Ovary (tissue), 10 donors: ENCODE measurements at regions of chr4 and their contacts with region 1.

Region 1: GRCh38 chr4:39977489-39978377 is at the start of gene PDS5A:
- DNase-seq: peak; percentile 84 to 92 (median 88)
- H3K4me3 ChIP-seq: peak within 1 kb of the TSS; percentile 95
- H3K27ac ChIP-seq: peak within 1 kb of the TSS; percentile 90 to 91
- H3K4me1 ChIP-seq: peaks cover 1% of the 10 kb centered on the region
- H3K27me3 ChIP-seq: no peaks in the 10 kb centered on the region
- CTCF ChIP-seq: peak; percentile 70 to 98 (median 98)
- EP300 ChIP-seq: no peak
- POLR2A ChIP-seq: peak; percentile 38
- total RNA-seq, gene PDS5A: 47.3 to 68.8 (median 64.7) TPM

Region 2: DNA sequence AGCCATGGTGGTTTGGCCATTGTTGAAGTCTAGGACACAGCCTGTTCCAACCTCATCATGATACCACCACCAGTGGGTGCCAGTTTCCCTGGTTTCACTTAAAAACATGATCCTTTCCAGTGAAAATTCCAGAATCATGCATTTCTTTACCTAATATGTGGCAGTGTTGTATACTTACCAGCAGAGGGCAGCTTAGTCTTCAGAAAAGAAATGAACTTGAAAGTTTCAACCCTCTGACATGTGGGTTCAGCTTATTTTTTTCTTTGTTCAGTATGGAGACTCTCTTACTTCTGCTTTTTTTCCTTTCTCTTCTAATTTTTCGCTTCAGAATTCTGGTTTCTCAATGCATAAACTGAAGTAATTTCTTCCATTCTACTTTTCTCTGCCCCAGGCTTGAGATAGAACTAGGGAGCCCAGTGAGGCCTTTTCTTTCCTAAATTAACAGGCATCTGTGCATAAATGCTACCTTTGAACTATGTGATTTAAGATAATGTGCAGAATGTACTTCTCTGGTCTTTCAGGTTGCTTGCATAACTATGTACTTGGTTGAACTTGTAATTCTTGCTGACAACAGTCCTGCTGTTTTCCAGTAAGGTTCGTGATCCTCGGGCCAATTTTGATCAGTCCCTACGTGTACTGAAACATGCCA is 508.2 kb before region 1 on chr4:
- intact Hi-C with region 1: loop called in 3 of 4 experiments (anchors 1 to 5 kb)
- DNase-seq: peak in 4 of 5 donors; percentile 46 to 69 (median 50)
- H3K4me3 ChIP-seq: no peak overlapping the region
- H3K27ac ChIP-seq: peak overlapping the region in 1 of 2 donors; percentile 57
- H3K4me1 ChIP-seq: no peaks in the 10 kb centered on the region
- H3K27me3 ChIP-seq: no peaks in the 10 kb centered on the region
- CTCF ChIP-seq: peak; percentile 76 to 91 (median 87)
- EP300 ChIP-seq: no peak
- POLR2A ChIP-seq: no peak

Region 3: GRCh38 chr4:39697740-39698423 is 279.9 kb before region 1 on chr4 and contains the start of gene UBE2K:
- intact Hi-C with region 1: loop called (anchors 2 to 10 kb)
- DNase-seq: peak; percentile 87 to 94 (median 88)
- H3K4me3 ChIP-seq: peak within 1 kb of the TSS; percentile 90
- H3K27ac ChIP-seq: peak within 1 kb of the TSS; percentile 62 to 87
- H3K4me1 ChIP-seq: no peaks in the 10 kb centered on the region
- H3K27me3 ChIP-seq: no peaks in the 10 kb centered on the region
- CTCF ChIP-seq: no peak
- EP300 ChIP-seq: no peak
- POLR2A ChIP-seq: peak; percentile 86
- total RNA-seq, gene UBE2K: 17.6 to 63.8 (median 52.2) TPM

Region 4: DNA sequence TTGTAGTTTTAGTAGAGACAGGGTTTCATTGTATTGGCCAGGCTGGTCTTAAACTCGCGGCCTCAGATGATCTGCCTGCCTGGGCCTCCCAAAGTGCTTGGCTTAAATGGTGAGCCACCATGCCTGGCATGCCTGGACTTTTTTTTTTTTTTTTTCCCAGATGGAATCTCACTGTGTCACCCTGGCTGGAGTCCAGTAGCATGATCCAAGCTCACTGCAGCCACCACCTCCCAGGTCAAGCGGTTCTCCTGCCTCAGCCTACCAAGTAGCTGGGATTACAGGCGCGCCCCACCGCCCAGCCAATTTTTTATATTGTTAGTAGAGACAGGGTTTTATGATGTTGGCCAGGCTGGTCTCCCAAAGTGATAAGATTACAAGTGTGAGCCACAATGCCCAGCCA is 271.4 kb before region 1 on chr4:
- intact Hi-C with region 1: loop called in 1 of 4 experiments (anchors 10 kb)
- DNase-seq: peak in 1 of 5 donors; percentile 27
- H3K4me3 ChIP-seq: no peak overlapping the region
- H3K27ac ChIP-seq: no peak overlapping the region
- H3K4me1 ChIP-seq: peaks cover 3% of the 10 kb centered on the region
- H3K27me3 ChIP-seq: no peaks in the 10 kb centered on the region
- CTCF ChIP-seq: no peak
- EP300 ChIP-seq: no peak
- POLR2A ChIP-seq: no peak

Region 5: GRCh38 chr4:40056716-40057585 is 79.2 kb after region 1 on chr4 and contains the start of gene N4BP2:
- intact Hi-C with region 1: loop called in 2 of 4 experiments (anchors 2 to 5 kb)
- DNase-seq: peak; percentile 85 to 94 (median 88)
- H3K4me3 ChIP-seq: peak within 1 kb of the TSS; percentile 100
- H3K27ac ChIP-seq: peak within 1 kb of the TSS; percentile 97 to 98
- H3K4me1 ChIP-seq: peaks cover 3% of the 10 kb centered on the region
- H3K27me3 ChIP-seq: no peaks in the 10 kb centered on the region
- CTCF ChIP-seq: peak; percentile 56 to 83 (median 76)
- EP300 ChIP-seq: no peak
- POLR2A ChIP-seq: peak; percentile 80
- total RNA-seq, gene N4BP2: 9.7 to 21.3 (median 11.9) TPM